Activated CD8-positive, alpha-beta T cell treated with anti-CD3 and anti-CD28 coated beads, Interleukin-2, amount 10 ng/mL, durations not matched to agents 7 days and 5 days (primary cell): ENCODE measurements at regions of chr4 and their contacts with region 1.

Region 1: DNA sequence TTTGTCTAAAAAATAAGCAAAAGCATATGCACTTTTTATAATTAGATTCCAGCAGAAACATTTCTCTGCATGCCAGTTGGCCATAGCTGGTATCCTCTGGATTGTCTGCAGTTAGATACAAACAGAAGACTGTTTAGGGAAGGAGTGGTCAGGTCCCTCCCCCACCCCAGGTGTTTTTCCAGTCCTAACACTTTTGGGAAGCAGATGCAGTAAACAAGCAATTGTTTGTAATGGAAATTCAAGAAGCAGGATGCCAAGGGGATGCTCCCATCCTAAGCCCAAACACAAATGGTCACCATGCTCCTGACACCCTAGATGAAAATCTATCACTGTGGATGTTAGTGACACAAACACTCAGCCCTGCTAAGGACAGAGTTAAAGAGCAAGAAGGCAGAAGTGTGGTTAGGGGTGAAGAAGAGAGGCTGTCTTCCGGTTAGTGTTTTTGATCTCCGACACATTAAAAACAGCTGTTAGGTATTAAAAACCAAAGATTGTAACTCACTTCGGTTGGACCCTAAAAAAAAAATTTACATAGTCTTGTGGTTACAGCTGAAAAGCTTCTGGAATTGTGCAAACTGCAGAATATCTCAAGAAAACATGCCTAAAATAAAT is 7.9 kb downstream of the LEF1 start:
- DNase-seq: no peak
- ATAC-seq: peak; percentile 62
- H3K4me3 Mint-ChIP-seq: peak overlapping the region; percentile 80
- H3K27ac Mint-ChIP-seq: peak overlapping the region; percentile 43
- H3K4me1 Mint-ChIP-seq: peaks cover 61% of the 10 kb centered on the region
- H3K27me3 Mint-ChIP-seq: no peaks in the 10 kb centered on the region

Region 2: GRCh38 chr4:108146819-108147218 is 14.0 kb before region 1 on chr4:
- CTCF ChIA-PET with region 1: interaction called, 21 read pairs
- POLR2A ChIA-PET with region 1: interaction called, 6 read pairs
- DNase-seq: no peak
- ATAC-seq: no peak
- H3K4me3 Mint-ChIP-seq: peak overlapping the region; percentile 59
- H3K27ac Mint-ChIP-seq: peak overlapping the region; percentile 75
- H3K4me1 Mint-ChIP-seq: peaks cover 87% of the 10 kb centered on the region
- H3K27me3 Mint-ChIP-seq: no peaks in the 10 kb centered on the region

Region 3: DNA sequence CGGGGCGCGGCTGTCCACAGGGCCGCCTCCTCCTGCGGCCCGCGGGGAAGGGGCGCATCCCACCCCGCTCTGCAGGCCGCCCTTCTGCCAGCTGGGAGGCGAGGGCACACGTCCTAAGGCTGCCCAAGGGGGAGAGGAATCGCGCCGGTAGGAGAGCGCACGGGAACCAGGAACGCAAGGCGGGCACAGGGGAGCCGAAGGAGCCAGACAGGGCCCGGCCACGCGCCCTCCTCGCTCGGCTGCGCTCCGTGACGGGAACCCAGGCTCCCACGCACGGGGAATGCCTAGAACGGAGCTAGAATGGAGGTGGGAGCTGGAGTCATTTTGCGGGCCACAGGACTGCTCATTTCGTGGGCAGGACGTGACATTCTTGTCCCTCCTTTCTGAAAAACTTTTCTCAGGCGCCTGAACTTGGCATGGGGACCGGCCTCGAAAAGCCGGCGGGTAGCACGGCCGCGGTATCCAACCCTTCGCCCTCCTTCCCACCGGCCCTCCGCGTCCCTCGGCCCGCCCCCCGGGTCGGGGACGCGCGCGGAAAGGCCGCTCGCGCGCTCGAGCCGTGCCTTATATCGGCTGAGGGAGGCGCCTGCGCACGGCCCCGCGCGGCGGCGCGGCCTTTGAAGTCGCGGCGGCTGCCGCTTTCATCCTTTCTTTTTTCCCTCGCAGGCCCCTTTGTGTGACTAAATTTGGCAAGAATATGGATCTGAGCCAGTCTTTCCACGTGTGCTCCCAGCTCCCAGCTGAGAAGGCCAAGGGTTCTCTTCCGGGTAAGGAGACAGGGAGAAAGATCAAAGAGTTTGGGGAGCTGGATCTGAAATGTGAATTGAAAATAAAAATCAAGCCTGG is 12.1 kb after region 1 on chr4:
- CTCF ChIA-PET with region 1: interaction called, 6 read pairs
- POLR2A ChIA-PET with region 1: interaction called, 20 read pairs
- DNase-seq: peak; percentile 78
- ATAC-seq: peak; percentile 58
- H3K4me3 Mint-ChIP-seq: peak overlapping the region; percentile 97
- H3K27ac Mint-ChIP-seq: peak overlapping the region; percentile 94
- H3K4me1 Mint-ChIP-seq: peaks cover 53% of the 10 kb centered on the region
- H3K27me3 Mint-ChIP-seq: peaks cover 19% of the 10 kb centered on the region

Region 4: DNA sequence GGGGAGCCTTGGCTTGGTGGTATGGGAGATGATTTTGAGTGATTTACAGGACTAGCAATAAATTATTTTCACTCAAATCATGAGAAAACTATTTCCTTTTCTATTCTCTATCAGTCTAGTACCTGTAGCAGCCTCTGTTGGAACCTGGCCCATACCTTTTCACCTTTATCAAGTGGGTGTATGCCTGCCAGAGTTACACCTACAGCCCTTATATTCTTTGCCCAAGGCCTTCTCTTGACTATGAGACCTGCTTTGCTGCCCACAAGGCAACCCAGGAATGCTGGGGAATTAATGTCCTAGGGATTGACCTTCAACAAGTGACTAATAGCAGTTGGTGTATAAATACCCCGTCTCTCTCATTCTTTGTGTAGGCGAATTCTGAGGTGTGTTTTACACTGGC is 27.9 kb after region 1 on chr4:
- CTCF ChIA-PET with region 1: no interaction called
- POLR2A ChIA-PET with region 1: no interaction called
- DNase-seq: no peak
- ATAC-seq: no peak
- H3K4me3 Mint-ChIP-seq: no peak overlapping the region
- H3K27ac Mint-ChIP-seq: no peak overlapping the region
- H3K4me1 Mint-ChIP-seq: peaks cover 6% of the 10 kb centered on the region
- H3K27me3 Mint-ChIP-seq: no peaks in the 10 kb centered on the region